Left ventricle myocardium superior (tissue), 1 donor: ENCODE measurements at regions of chr10 and their contacts with region 1.

Region 1: DNA sequence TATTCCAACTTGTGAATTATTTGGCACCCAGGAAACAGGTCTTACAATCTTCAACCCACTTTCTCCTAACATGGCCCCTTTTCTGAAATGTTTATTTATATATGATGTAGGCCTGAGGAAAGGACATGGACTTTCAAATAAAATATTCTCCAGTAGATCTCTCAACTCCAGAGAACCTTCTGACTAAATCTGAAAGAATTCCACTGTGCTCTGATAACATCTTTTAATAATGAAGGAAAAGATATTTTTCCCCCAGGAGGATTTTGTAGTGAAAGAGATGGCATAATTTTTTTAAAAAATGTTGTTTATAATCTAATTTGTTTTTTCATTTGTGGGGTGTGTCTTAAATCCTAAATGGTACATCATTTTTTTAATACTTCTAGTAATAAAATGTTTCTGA is 172.2 kb downstream of the MALRD1 start:
- DNase-seq: no peak
- ATAC-seq: no peak

Region 2: DNA sequence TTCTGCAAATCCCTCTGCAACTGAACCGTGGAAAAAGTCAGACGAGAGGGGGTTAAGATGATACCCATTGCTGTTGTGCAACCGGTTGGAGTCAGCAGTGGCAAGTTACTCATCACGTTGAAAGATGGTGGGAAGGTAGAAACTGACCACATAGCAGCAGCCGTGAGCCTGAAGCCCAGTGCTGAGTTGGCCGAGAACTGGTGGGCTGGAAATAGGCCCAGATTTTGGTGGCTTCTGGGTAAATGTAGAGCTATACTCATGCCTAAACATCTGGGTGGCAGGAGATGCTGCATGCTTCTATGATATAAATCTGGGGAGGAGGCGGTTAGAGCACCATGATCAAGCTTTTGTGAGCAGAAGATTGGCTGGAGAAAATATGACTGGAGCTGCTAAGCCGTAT is 483.0 kb before region 1 on chr10:
- intact Hi-C with region 1: loop called (anchors 5 kb)
- DNase-seq: no peak
- ATAC-seq: no peak